ENCODE measurements at regions of chr19 and their contacts with region 1.

Region 1: DNA sequence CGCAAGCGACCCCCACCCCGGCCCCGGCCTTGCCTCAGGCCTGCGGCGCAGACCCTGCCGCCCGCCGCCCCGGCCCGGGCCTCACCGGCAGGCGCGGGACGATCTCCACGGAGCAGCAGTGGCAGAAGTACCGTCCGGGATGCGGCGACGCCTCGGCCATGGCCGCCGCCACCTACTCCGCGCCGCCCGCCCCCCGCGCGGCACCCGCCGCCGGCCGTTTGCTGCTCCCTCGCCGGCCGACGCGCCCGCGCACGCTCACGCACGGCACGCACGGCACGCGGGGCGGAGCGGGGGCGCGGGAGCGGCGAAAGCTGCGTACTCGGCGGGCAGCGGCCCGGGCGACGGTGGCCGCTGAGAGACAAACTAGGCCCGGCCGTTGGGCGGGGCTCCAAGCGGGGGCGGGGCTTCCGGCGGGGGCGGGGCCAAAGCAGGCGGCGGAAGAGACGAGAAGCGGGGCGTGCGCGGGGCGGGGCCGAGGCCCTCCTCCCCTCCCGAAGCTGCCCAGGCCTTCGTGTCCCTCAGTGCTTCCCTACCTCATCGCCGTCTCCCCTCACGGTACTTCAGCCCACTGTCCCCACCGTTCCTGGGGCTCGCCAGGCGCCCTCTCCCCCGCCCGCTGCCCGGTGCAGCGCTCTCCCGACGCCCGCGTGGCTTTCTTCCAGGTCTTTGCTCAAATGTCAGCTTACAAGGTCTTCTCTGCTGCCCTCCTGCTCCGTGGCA is at the start of gene RNF126:
- DNase-seq: peak; percentile 83 to 92
- ATAC-seq: peak; percentile 83 to 89
- H3K4me3 ChIP-seq: peak within 1 kb of the TSS; percentile 88 to 97 (median 91)
- H3K27ac ChIP-seq: peak within 1 kb of the TSS; percentile 93 to 100 (median 96)
- H3K4me1 ChIP-seq: peaks cover 28 to 59% of the 10 kb centered on the region in 2 donors
- H3K27me3 ChIP-seq: no peaks in the 10 kb centered on the region
- CTCF ChIP-seq: peak in 1 of 5 experiments; percentile 14
- POLR2A ChIP-seq: peak; percentile 83 to 90
- total RNA-seq, gene RNF126: 72.3 to 148 (median 129) TPM

Region 2: GRCh38 chr19:633068-633785 is 29.9 kb before region 1 on chr19 and contains the start of gene POLRMT:
- in situ Hi-C with region 1: no loop called
- intact Hi-C with region 1: loop called (anchors 1 kb)
- DNase-seq: peak; percentile 98 to 99
- ATAC-seq: peak; percentile 100
- H3K4me3 ChIP-seq: peak within 1 kb of the TSS; percentile 75 to 99 (median 88)
- H3K27ac ChIP-seq: peak within 1 kb of the TSS; percentile 81 to 91 (median 86)
- H3K4me1 ChIP-seq: peaks cover 10 to 25% of the 10 kb centered on the region in 2 donors
- H3K27me3 ChIP-seq: no peaks in the 10 kb centered on the region
- CTCF ChIP-seq: peak in 1 of 5 experiments; percentile 25
- POLR2A ChIP-seq: peak; percentile 62 to 80
- total RNA-seq, gene POLRMT: 43.9 to 83.4 (median 73.8) TPM

Region 3: DNA sequence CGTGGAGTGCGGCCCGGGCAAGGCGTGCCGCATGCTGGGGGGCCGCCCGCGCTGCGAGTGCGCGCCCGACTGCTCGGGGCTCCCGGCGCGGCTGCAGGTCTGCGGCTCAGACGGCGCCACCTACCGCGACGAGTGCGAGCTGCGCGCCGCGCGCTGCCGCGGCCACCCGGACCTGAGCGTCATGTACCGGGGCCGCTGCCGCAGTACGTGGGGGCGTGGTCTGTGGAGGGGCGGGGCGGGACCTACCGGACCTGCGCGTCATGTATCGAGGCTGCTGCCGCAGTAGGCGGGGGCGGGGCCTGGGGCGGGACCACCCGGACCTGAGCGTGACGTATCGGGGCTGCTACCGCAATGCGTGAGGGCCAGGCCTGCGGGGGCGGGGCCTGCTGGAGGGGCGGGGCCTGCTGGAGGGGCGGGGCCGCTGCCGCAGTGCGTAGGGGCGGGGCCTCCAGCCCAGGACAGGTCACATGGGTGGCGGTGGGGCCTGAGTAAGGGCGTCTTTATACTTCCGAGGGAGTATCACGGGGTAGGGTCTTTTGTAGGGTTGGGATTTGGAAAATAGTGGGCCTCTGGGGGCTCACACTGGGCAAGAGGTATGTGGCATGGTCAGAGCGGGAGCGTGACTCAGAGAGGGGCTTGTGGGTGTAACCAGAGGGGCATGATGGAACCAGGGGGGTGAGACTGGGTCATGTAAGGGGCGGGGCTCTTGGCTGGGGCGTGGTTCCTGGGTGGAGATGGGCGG is 17.3 kb after region 1 on chr19:
- in situ Hi-C with region 1: no loop called
- intact Hi-C with region 1: loop called (anchors 1 kb)
- DNase-seq: peak; percentile 99 to 100
- ATAC-seq: peak; percentile 84 to 87
- H3K4me3 ChIP-seq: peak overlapping the region; percentile 56 to 89 (median 66)
- H3K27ac ChIP-seq: peak overlapping the region; percentile 77 to 89 (median 86)
- H3K4me1 ChIP-seq: peaks cover 0 to 28% of the 10 kb centered on the region in 2 donors
- H3K27me3 ChIP-seq: peaks cover 7 to 12% (median 9%) of the 10 kb centered on the region in 3 donors
- CTCF ChIP-seq: peak in 3 of 5 experiments; percentile 61 to 66 (median 65)
- POLR2A ChIP-seq: peak; percentile 55 to 78

Region 4: GRCh38 chr19:732148-733069 is 69.3 kb after region 1 on chr19:
- in situ Hi-C with region 1: loop called in 3 of 4 experiments (anchors 5 to 10 kb)
- intact Hi-C with region 1: loop called (anchors 1 kb)
- DNase-seq: no peak
- ATAC-seq: no peak
- H3K4me3 ChIP-seq: no peak overlapping the region
- H3K27ac ChIP-seq: no peak overlapping the region
- H3K4me1 ChIP-seq: no peaks in the 10 kb centered on the region
- H3K27me3 ChIP-seq: no peaks in the 10 kb centered on the region
- CTCF ChIP-seq: no peak
- POLR2A ChIP-seq: no peak

Region 5: GRCh38 chr19:737581-738093 is 74.5 kb after region 1 on chr19:
- in situ Hi-C with region 1: loop called in 3 of 4 experiments (anchors 5 to 10 kb)
- intact Hi-C with region 1: loop called (anchors 1 kb)
- DNase-seq: no peak
- ATAC-seq: peak in 1 of 2 donors; percentile 30
- H3K4me3 ChIP-seq: no peak overlapping the region
- H3K27ac ChIP-seq: no peak overlapping the region
- H3K4me1 ChIP-seq: no peaks in the 10 kb centered on the region
- H3K27me3 ChIP-seq: no peaks in the 10 kb centered on the region
- CTCF ChIP-seq: peak in 3 of 5 experiments; percentile 30 to 46 (median 38)
- POLR2A ChIP-seq: no peak

Region 6: DNA sequence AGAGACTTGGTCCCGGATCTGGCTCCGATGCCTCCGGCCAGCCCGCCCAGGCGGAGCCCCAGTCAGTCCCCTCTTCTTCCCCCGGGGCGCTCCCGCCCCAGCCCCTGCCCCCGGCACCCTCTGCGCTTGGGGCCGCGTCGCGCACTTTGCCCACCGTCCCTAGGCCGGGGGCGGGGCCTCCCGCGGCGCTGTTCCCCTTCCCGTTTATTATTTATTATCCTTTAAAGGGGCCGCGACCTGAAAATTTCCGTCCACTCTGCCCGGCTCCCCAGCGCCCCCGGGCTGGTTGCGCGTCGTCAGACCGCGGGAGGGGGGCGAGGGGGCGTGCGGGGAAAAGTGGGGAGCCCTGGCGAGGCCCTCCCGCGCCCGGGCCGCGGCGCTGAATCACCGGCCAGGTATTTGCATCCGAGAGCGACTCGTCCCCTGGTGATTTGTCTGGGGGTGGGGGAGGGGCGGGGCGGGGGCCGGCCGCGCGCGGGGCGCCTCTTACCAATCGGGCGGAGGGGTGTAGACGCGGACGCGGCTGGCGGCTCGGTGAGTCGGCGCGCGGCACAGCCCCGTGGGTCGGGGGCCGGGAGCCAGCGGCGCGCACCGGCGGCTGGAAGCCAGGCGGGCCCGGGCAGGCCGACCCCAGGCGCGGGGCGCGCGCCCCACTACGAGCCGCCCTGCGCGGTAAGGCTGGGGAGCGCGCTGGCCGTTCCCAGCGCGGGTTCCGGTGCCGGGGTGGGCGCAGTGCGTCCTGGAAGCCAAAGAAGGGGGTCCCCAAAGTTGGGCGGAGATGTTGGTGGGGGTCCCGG is 262.6 kb after region 1 on chr19 and contains the start of gene ARID3A:
- in situ Hi-C with region 1: no loop called
- intact Hi-C with region 1: loop called (anchors 10 kb)
- DNase-seq: peak; percentile 61 to 63
- ATAC-seq: peak; percentile 83 to 85
- H3K4me3 ChIP-seq: peak within 1 kb of the TSS; percentile 86 to 96 (median 93)
- H3K27ac ChIP-seq: peak within 1 kb of the TSS; percentile 81 to 91 (median 86)
- H3K4me1 ChIP-seq: peaks cover 5 to 19% of the 10 kb centered on the region in 2 donors
- H3K27me3 ChIP-seq: peaks cover 8% of the 10 kb centered on the region in 3 donors
- CTCF ChIP-seq: peak in 3 of 5 experiments; percentile 2 to 18 (median 16)
- POLR2A ChIP-seq: peak; percentile 59 to 87
- total RNA-seq, gene ARID3A: 1.8 to 9.9 (median 7.8) TPM